ENCODE measurements at regions of chr20 and their contacts with region 1.

Region 1: DNA sequence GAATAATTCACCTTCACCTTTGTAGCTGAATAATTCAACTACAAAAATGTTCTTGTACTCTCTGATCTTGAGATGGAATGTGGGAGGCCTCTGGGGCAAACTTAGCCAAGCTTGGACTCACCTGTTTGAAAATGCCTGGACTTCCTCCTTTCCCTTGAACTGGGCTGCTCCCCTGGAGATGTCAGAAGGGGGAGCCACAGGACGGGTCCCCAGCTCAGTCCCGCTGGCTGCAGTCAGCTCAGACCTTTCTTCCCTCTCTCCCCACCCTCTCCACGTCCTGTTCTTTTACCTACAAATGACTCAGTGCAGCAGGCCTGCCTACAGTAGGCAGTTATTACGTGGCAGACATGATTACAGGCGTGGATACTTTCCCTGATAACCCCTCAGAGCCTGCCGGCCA is 131.5 kb upstream of the RALGAPA2 start:
- DNase-seq: no peak
- ATAC-seq: no peak
- H3K4me3 ChIP-seq: no peak overlapping the region
- H3K27ac ChIP-seq: no peak overlapping the region
- H3K4me1 ChIP-seq: no peaks in the 10 kb centered on the region
- H3K27me3 ChIP-seq: peaks cover 0 to 25% (median 0%) of the 10 kb centered on the region in 9 donors
- CTCF ChIP-seq: no peak
- POLR2A ChIP-seq: no peak

Region 2: GRCh38 chr20:21505161-21505809 is 661.3 kb after region 1 on chr20:
- intact Hi-C with region 1: loop called in 7 of 10 experiments (anchors 5 to 10 kb)
- DNase-seq: peak; percentile 36 to 86 (median 55)
- ATAC-seq: peak in 3 of 4 donors; percentile 48 to 76 (median 70)
- H3K4me3 ChIP-seq: peak overlapping the region in 9 of 12 donors; percentile 22 to 57 (median 44)
- H3K27ac ChIP-seq: no peak overlapping the region
- H3K4me1 ChIP-seq: peaks cover 0 to 31% (median 19%) of the 10 kb centered on the region in 12 donors
- H3K27me3 ChIP-seq: peaks cover 51 to 98% (median 76%) of the 10 kb centered on the region in 9 donors
- CTCF ChIP-seq: peak; percentile 88 to 97 (median 93)
- POLR2A ChIP-seq: no peak